ENCODE measurements at regions of chr6 and their contacts with region 1.

Region 1: GRCh38 chr6:118968416-118968815 is 33.5 kb upstream of the MCM9 start:
- DNase-seq: no peak
- H3K4me3 ChIP-seq: no peak overlapping the region
- H3K27ac ChIP-seq: no peak overlapping the region
- H3K4me1 ChIP-seq: no peaks in the 10 kb centered on the region
- H3K27me3 ChIP-seq: no peaks in the 10 kb centered on the region
- CTCF ChIP-seq: peak; percentile 64

Region 2: GRCh38 chr6:118333772-118334171 is 634.6 kb before region 1 on chr6:
- CTCF ChIA-PET with region 1: no interaction called
- POLR2A ChIA-PET with region 1: no interaction called
- intact Hi-C with region 1: loop called (anchors 5 kb)
- DNase-seq: no peak
- H3K4me3 ChIP-seq: no peak overlapping the region
- H3K27ac ChIP-seq: no peak overlapping the region
- H3K4me1 ChIP-seq: no peaks in the 10 kb centered on the region
- H3K27me3 ChIP-seq: no peaks in the 10 kb centered on the region
- CTCF ChIP-seq: no peak

Region 3: DNA sequence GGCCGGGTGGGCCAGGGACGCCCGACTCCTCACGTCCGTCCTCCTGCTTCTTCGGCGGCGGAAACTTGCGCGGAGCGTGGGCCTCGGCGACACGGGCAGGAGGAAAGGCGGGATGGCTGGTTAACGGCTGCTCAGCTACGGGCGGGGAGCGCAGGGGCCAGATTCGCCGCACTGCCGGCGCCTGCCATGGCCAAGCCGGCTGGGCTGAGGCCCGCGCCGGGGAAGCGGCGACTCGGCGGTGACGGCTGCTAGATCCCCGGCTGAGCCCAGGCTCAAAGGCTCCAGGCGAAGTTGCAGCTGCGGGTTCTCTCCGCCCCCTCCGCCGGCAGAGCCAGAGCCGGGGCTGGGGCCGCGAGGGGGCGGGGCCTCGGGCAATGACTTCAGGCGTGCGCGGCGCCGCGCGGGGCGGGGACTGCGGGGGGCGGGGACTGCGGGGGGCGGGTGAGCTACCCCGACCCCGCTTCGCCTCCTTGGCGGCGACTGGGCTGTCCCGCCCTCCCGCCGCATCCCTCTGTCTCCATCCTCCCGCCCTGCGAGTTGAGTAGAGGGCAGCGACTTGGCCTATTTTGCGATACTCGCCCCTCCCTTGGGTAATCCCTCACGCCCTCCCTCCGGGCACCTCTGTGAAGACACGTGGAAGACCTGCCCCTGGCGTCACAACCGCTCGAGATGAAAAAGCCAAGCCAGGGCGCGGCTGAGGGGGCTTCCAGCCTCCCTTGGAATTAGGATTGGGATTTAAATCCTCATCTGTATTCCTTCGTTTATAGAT is 316.9 kb before region 1 on chr6 and contains the start of gene CEP85L:
- CTCF ChIA-PET with region 1: no interaction called
- POLR2A ChIA-PET with region 1: no interaction called
- intact Hi-C with region 1: no loop called
- DNase-seq: peak; percentile 82 to 84
- H3K4me3 ChIP-seq: peak within 1 kb of the TSS; percentile 82
- H3K27ac ChIP-seq: peak within 1 kb of the TSS; percentile 30; the same call in 1 of the 2 replicates
- H3K4me1 ChIP-seq: peaks cover 23% of the 10 kb centered on the region
- H3K27me3 ChIP-seq: no peaks in the 10 kb centered on the region
- CTCF ChIP-seq: no peak
- total RNA-seq, gene CEP85L: 3.0 TPM in 2 replicates

Region 4: DNA sequence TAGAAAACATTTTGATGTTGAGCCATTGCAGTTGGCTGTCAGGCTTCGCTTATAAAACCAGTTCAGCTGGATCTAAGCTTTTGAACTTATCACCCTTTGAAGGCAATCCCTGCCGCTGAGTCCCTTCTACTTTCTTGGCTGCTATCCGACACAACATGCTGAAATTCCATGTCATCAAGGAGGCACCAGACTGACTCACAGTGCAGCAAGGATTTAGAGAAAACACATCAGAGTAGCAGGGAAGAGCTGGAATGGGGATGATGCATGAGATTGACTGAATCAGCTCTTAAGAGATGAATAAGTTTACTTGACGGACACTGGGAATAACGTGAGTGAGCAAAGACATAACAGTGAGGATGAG is 516.2 kb after region 1 on chr6:
- CTCF ChIA-PET with region 1: no interaction called
- POLR2A ChIA-PET with region 1: no interaction called
- intact Hi-C with region 1: no loop called
- DNase-seq: peak; percentile 72 to 99
- H3K4me3 ChIP-seq: no peak overlapping the region
- H3K27ac ChIP-seq: peak overlapping the region; percentile 75
- H3K4me1 ChIP-seq: peaks cover 29% of the 10 kb centered on the region
- H3K27me3 ChIP-seq: no peaks in the 10 kb centered on the region
- CTCF ChIP-seq: no peak